Common myeloid progenitor, CD34-positive (primary cell): ENCODE measurements at regions of chr1 and their contacts with region 1.

Region 1: GRCh38 chr1:244937099-244937498 is 72.8 kb upstream of the HNRNPU start:
- DNase-seq: no peak
- H3K4me3 ChIP-seq: no peak overlapping the region
- H3K27ac ChIP-seq: no peak overlapping the region
- H3K4me1 ChIP-seq: no peaks in the 10 kb centered on the region
- H3K27me3 ChIP-seq: no peaks in the 10 kb centered on the region

Region 2: GRCh38 chr1:244920911-244921761 is 16.0 kb before region 1 on chr1:
- CTCF ChIA-PET with region 1: interaction called, 12 read pairs
- POLR2A ChIA-PET with region 1: interaction called, 4 read pairs
- DNase-seq: peak; percentile 54 to 92 (median 87)
- H3K4me3 ChIP-seq: peak overlapping the region in 2 of 7 experiments; percentile 19 to 65
- H3K27ac ChIP-seq: peak overlapping the region in 1 of 2 experiments; percentile 64
- H3K4me1 ChIP-seq: peaks cover 7 to 34% (median 28%) of the 10 kb centered on the region in 4 experiments
- H3K27me3 ChIP-seq: no peaks in the 10 kb centered on the region